ENCODE measurements at regions of chr5 and their contacts with region 1.

Region 1: GRCh38 chr5:91126448-91126847 is 256.7 kb downstream of the ARRDC3 start:
- DNase-seq: peak in 1 of 5 donors; percentile 56
- H3K4me3 ChIP-seq: no peak overlapping the region
- H3K27ac ChIP-seq: peak overlapping the region in 1 of 2 donors; percentile 49
- H3K4me1 ChIP-seq: peaks cover 0 to 3% (median 0%) of the 10 kb centered on the region in 3 donors
- H3K27me3 ChIP-seq: no peaks in the 10 kb centered on the region
- CTCF ChIP-seq: no peak

Region 2: DNA sequence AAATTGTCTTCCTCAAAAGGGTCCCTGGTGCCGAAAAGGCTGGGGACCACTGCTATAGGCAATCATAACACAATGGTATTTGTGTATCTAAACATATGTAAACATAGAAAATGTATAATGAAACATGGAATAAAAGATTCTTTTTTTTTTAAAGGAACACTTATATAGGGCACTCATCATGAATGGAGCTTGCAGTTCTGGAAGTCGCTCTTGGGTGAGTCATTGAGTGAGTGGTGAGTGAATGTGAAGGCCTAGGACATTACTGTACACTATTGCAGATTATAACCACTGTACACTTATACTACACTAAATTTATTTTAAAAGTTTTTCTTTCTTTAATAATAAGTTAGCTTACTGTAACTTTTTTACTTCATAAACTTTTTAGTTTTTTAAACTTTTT is 80.3 kb after region 1 on chr5:
- intact Hi-C with region 1: loop called (anchors 10 kb)
- DNase-seq: no peak
- H3K4me3 ChIP-seq: no peak overlapping the region
- H3K27ac ChIP-seq: no peak overlapping the region
- H3K4me1 ChIP-seq: no peaks in the 10 kb centered on the region
- H3K27me3 ChIP-seq: no peaks in the 10 kb centered on the region
- CTCF ChIP-seq: no peak

Region 3: GRCh38 chr5:91417219-91417618 is 290.8 kb after region 1 on chr5:
- intact Hi-C with region 1: no loop called
- DNase-seq: no peak
- H3K4me3 ChIP-seq: no peak overlapping the region
- H3K27ac ChIP-seq: no peak overlapping the region
- H3K4me1 ChIP-seq: no peaks in the 10 kb centered on the region
- H3K27me3 ChIP-seq: no peaks in the 10 kb centered on the region
- CTCF ChIP-seq: no peak

Measured in kidney (tissue), 22 donors.